Activated naive CD4-positive, alpha-beta T cell treated with anti-CD3 and anti-CD28 coated beads for 36 hours (primary cell): ENCODE measurements at regions of chr19 and their contacts with region 1.

Region 1: DNA sequence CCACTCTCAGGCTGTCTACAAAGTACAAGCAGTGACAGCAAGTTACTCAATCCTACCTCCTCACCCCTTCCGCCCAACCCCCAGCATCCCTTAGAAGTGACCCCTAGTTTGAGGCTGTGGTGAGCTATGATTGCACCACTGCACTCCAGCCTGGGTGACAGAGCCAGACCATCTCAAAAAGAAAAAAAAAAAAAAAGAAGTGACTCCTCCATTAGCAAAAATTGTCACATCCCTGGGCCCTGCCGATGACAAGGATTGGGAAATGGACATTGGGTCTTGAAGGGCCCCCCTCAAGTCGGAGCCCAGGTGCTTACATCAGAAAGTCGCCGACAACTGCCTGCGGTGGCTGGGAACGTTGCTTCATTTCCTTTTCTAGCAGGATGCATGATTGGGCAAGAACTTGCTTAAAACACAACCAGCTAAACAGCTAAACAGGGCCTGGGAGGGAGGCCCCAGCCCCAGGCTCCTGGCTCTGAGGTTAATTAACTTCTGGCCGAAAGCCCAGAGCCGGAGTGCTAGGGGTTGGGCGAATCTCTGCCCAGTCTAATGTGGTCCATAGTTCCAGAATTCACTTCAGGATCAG is 15.3 kb downstream of the RAB3D start:
- DNase-seq: peak; percentile 85
- H3K4me3 Mint-ChIP-seq: peak overlapping the region; percentile 75
- H3K27ac Mint-ChIP-seq: peak overlapping the region; percentile 87
- H3K4me1 Mint-ChIP-seq: peaks cover 20% of the 10 kb centered on the region
- H3K27me3 Mint-ChIP-seq: peaks cover 7% of the 10 kb centered on the region

Region 2: GRCh38 chr19:10936661-10937084 is 387.5 kb before region 1 on chr19:
- CTCF ChIA-PET with region 1: no interaction called
- intact Hi-C with region 1: no loop called
- DNase-seq: peak; percentile 46
- H3K4me3 Mint-ChIP-seq: no peak overlapping the region
- H3K27ac Mint-ChIP-seq: no peak overlapping the region
- H3K4me1 Mint-ChIP-seq: peaks cover 6% of the 10 kb centered on the region
- H3K27me3 Mint-ChIP-seq: no peaks in the 10 kb centered on the region

Region 3: DNA sequence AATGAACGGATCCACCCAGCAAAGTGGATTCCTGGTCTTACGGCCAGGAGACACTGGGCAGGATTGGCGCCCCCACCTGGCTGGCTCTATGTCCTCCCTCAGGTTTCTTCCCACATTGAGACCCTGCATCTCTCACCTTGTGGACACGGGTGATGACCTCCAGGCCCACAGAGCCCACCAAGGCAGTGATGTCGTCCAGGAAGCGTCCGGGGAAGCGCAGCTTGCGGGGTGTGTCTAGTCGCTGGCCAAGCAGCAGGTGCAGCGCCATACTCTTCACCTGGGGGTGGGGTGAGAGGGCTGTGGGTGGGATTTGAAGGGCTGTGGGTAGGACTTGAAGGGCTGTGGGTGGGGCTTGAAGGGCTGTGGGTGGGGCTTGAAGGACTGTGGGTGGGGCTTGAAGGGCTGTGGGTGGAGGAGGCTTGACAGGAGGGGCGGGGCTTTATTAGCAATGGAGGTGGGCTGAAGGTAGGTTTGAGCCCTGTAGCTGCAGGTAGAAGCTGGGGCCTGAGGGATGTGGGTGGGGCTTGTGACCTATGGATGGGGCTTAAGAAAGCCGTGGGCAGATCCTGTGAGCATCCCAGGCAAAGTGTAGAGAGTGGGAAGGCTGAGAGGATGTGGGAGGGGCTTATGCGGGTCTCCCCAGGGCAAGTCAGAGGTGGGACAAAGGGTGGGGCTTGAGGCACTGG is 96.8 kb before region 1 on chr19:
- CTCF ChIA-PET with region 1: no interaction called
- intact Hi-C with region 1: no loop called
- DNase-seq: no peak
- H3K4me3 Mint-ChIP-seq: no peak overlapping the region
- H3K27ac Mint-ChIP-seq: no peak overlapping the region
- H3K4me1 Mint-ChIP-seq: no peaks in the 10 kb centered on the region
- H3K27me3 Mint-ChIP-seq: no peaks in the 10 kb centered on the region

Region 4: DNA sequence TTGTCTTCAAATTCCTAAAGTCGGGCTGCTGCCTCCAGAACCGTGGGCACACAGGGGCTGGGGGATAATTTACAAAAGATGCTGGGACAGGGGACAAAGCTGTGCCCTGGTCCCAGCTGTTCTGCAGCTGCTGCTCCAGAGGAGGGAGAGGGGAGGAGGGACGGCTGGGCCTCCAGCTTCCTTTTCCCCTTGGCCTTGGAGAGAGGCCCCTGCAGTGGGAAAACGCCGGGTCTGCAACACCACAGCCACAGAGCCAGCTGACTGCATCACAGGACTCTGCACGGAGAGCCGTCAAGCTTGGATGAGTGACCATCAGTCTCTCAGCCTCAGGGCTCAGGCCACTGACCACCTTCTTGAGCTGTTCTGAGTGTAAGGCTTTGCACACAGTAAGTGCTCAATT is 68.0 kb before region 1 on chr19:
- CTCF ChIA-PET with region 1: no interaction called
- intact Hi-C with region 1: loop called (anchors 5 kb)
- DNase-seq: no peak
- H3K4me3 Mint-ChIP-seq: no peak overlapping the region
- H3K27ac Mint-ChIP-seq: no peak overlapping the region
- H3K4me1 Mint-ChIP-seq: no peaks in the 10 kb centered on the region
- H3K27me3 Mint-ChIP-seq: peaks cover 10% of the 10 kb centered on the region

Region 5: GRCh38 chr19:11279496-11280236 is 44.5 kb before region 1 on chr19:
- CTCF ChIA-PET with region 1: no interaction called
- intact Hi-C with region 1: no loop called
- DNase-seq: peak; percentile 48
- H3K4me3 Mint-ChIP-seq: peak overlapping the region; percentile 13
- H3K27ac Mint-ChIP-seq: no peak overlapping the region
- H3K4me1 Mint-ChIP-seq: peaks cover 6% of the 10 kb centered on the region
- H3K27me3 Mint-ChIP-seq: peaks cover 38% of the 10 kb centered on the region

Region 6: GRCh38 chr19:11293433-11294389 is 30.5 kb before region 1 on chr19:
- CTCF ChIA-PET with region 1: interaction called, 3 read pairs
- intact Hi-C with region 1: loop called (anchors 1 kb)
- DNase-seq: peak; percentile 90
- H3K4me3 Mint-ChIP-seq: peak overlapping the region; percentile 66
- H3K27ac Mint-ChIP-seq: no peak overlapping the region
- H3K4me1 Mint-ChIP-seq: peaks cover 9% of the 10 kb centered on the region
- H3K27me3 Mint-ChIP-seq: peaks cover 8% of the 10 kb centered on the region

Region 7: GRCh38 chr19:11339254-11340098 is 15.3 kb after region 1 on chr19 and contains the start of gene RAB3D:
- CTCF ChIA-PET with region 1: interaction called, 3 read pairs
- intact Hi-C with region 1: loop called (anchors 2 kb)
- DNase-seq: peak; percentile 92
- H3K4me3 Mint-ChIP-seq: peak within 1 kb of the TSS; percentile 79
- H3K27ac Mint-ChIP-seq: no peak within 1 kb of the TSS
- H3K4me1 Mint-ChIP-seq: peaks cover 20% of the 10 kb centered on the region
- H3K27me3 Mint-ChIP-seq: no peaks in the 10 kb centered on the region
- total RNA-seq, gene RAB3D: 9.8 to 10.7 TPM

Region 8: GRCh38 chr19:11494634-11495285 is 170.6 kb after region 1 on chr19:
- CTCF ChIA-PET with region 1: no interaction called
- intact Hi-C with region 1: no loop called
- DNase-seq: no peak
- H3K4me3 Mint-ChIP-seq: no peak overlapping the region
- H3K27ac Mint-ChIP-seq: no peak overlapping the region
- H3K4me1 Mint-ChIP-seq: no peaks in the 10 kb centered on the region
- H3K27me3 Mint-ChIP-seq: no peaks in the 10 kb centered on the region

Region 9: GRCh38 chr19:11505032-11505503 is 180.9 kb after region 1 on chr19:
- CTCF ChIA-PET with region 1: no interaction called
- intact Hi-C with region 1: loop called (anchors 1 kb)
- DNase-seq: peak; percentile 95
- H3K4me3 Mint-ChIP-seq: peak overlapping the region; percentile 86
- H3K27ac Mint-ChIP-seq: peak overlapping the region; percentile 36
- H3K4me1 Mint-ChIP-seq: peaks cover 15% of the 10 kb centered on the region
- H3K27me3 Mint-ChIP-seq: no peaks in the 10 kb centered on the region